ENCODE measurements at regions of chr4 and their contacts with region 1.

Region 1: GRCh38 chr4:151960449-151961230 is 199.8 kb upstream of the GATB start:
- DNase-seq: no peak
- ATAC-seq: no peak
- H3K4me3 ChIP-seq: no peak overlapping the region
- H3K4me3 Mint-ChIP-seq: no peak overlapping the region
- H3K27ac ChIP-seq: no peak overlapping the region
- H3K27ac Mint-ChIP-seq: no peak overlapping the region
- H3K4me1 ChIP-seq: no peaks in the 10 kb centered on the region
- H3K4me1 Mint-ChIP-seq: peaks cover 18% of the 10 kb centered on the region
- H3K27me3 ChIP-seq: no peaks in the 10 kb centered on the region
- H3K27me3 Mint-ChIP-seq: no peaks in the 10 kb centered on the region
- CTCF ChIP-seq: no peak

Region 2: GRCh38 chr4:152352622-152353116 is 392.0 kb after region 1 on chr4:
- CTCF ChIA-PET with region 1: no interaction called
- POLR2A ChIA-PET with region 1: no interaction called
- intact Hi-C with region 1: loop called in 1 of 2 experiments (anchors 5 kb)
- DNase-seq: peak in 4 of 14 experiments; percentile 9 to 39 (median 26)
- ATAC-seq: peak; percentile 88
- H3K4me3 ChIP-seq: no peak overlapping the region
- H3K4me3 Mint-ChIP-seq: peak overlapping the region; percentile 50
- H3K27ac ChIP-seq: no peak overlapping the region
- H3K27ac Mint-ChIP-seq: no peak overlapping the region
- H3K4me1 ChIP-seq: no peaks in the 10 kb centered on the region
- H3K4me1 Mint-ChIP-seq: peaks cover 36% of the 10 kb centered on the region
- H3K27me3 ChIP-seq: no peaks in the 10 kb centered on the region
- H3K27me3 Mint-ChIP-seq: no peaks in the 10 kb centered on the region
- CTCF ChIP-seq: no peak